CD4-positive, alpha-beta T cell (primary cell): ENCODE measurements at regions of chr20 and their contacts with region 1.

Region 1: GRCh38 chr20:59120491-59120890 is 43.1 kb upstream of the ZNF831 start:
- DNase-seq: peak in 6 of 14 experiments; percentile 23 to 79 (median 50)
- ATAC-seq: no peak
- H3K4me3 ChIP-seq: no peak overlapping the region
- H3K4me3 Mint-ChIP-seq: peak overlapping the region; percentile 72
- H3K27ac ChIP-seq: peak overlapping the region; percentile 77 to 85
- H3K27ac Mint-ChIP-seq: peak overlapping the region; percentile 99
- H3K4me1 ChIP-seq: peaks cover 85% of the 10 kb centered on the region
- H3K4me1 Mint-ChIP-seq: peaks cover 89% of the 10 kb centered on the region
- H3K27me3 ChIP-seq: no peaks in the 10 kb centered on the region
- H3K27me3 Mint-ChIP-seq: no peaks in the 10 kb centered on the region
- CTCF ChIP-seq: no peak

Region 2: GRCh38 chr20:58888521-58889333 is 231.8 kb before region 1 on chr20:
- CTCF ChIA-PET with region 1: no interaction called
- POLR2A ChIA-PET with region 1: interaction called, 18 read pairs
- intact Hi-C with region 1: no loop called
- DNase-seq: peak; percentile 69 to 93 (median 82)
- ATAC-seq: peak; percentile 49
- H3K4me3 ChIP-seq: peak overlapping the region; percentile 83
- H3K4me3 Mint-ChIP-seq: peak overlapping the region; percentile 89
- H3K27ac ChIP-seq: peak overlapping the region; percentile 65 to 72
- H3K27ac Mint-ChIP-seq: peak overlapping the region; percentile 95
- H3K4me1 ChIP-seq: peaks cover 11% of the 10 kb centered on the region
- H3K4me1 Mint-ChIP-seq: peaks cover 52% of the 10 kb centered on the region
- H3K27me3 ChIP-seq: no peaks in the 10 kb centered on the region
- H3K27me3 Mint-ChIP-seq: no peaks in the 10 kb centered on the region
- CTCF ChIP-seq: no peak

Region 3: DNA sequence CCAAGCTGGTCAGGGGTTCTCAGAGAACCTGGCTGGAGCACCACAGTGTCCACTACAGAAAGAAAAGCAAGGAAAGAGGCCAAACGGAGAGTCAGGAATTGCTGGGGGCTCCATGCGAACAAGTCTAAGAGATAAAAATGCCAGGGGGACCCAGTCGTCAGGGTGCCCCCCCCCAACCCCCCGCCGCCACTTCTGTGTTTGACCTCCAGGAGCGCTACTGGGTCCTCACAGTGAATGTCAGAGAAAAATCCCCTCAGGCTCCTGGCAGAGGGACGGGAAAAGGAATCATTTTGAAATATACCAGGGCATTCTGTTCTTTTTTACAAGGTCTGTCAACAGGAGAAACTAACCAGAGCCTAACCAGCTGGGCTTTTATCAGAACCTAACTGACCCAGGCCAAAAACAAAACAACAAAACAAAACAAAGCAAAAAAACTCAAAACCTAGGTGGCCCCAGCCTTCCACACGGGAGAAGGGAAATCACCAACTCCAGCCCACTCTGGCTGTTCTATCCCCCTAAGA is 157.4 kb before region 1 on chr20:
- CTCF ChIA-PET with region 1: no interaction called
- POLR2A ChIA-PET with region 1: no interaction called
- intact Hi-C with region 1: no loop called
- DNase-seq: no peak
- ATAC-seq: no peak
- H3K4me3 ChIP-seq: no peak overlapping the region
- H3K4me3 Mint-ChIP-seq: no peak overlapping the region
- H3K27ac ChIP-seq: no peak overlapping the region
- H3K27ac Mint-ChIP-seq: no peak overlapping the region
- H3K4me1 ChIP-seq: no peaks in the 10 kb centered on the region
- H3K4me1 Mint-ChIP-seq: no peaks in the 10 kb centered on the region
- H3K27me3 ChIP-seq: no peaks in the 10 kb centered on the region
- H3K27me3 Mint-ChIP-seq: peaks cover 7% of the 10 kb centered on the region
- CTCF ChIP-seq: no peak

Region 4: DNA sequence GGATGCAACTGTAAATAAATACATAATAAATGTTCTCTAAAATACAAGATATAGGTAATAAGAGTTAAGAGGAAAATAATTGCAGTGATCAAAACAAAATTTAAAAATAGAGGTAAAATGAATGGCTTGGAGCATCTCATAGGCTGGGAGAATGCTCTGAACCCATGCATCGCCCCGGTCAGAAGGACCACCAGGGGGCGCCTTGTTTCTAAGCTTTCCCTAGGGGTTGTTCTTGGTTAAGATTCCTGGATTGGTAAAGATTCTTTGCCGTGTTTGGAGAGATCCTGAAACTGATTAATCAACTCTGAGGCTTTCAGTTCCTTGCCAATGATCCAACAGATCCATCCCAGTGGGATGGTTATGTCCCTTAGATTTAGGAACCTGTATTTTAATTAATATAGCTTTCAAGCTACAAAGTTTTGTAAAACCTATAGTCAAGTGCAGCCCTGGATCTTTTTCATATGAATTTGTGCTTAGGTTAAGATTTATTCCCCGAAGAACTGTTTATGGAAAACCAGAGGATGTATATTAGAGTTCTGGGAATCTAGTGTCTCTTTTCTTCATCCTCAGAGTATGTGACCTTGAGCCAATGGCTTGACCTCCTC is 32.6 kb before region 1 on chr20:
- CTCF ChIA-PET with region 1: interaction called, 42 read pairs
- POLR2A ChIA-PET with region 1: interaction called, 23 read pairs
- intact Hi-C with region 1: loop called (anchors 2 to 5 kb)
- DNase-seq: peak; percentile 76 to 94 (median 87)
- ATAC-seq: peak; percentile 91
- H3K4me3 ChIP-seq: no peak overlapping the region
- H3K4me3 Mint-ChIP-seq: no peak overlapping the region
- H3K27ac ChIP-seq: no peak overlapping the region
- H3K27ac Mint-ChIP-seq: peak overlapping the region; percentile 44
- H3K4me1 ChIP-seq: peaks cover 3% of the 10 kb centered on the region
- H3K4me1 Mint-ChIP-seq: peaks cover 7% of the 10 kb centered on the region
- H3K27me3 ChIP-seq: no peaks in the 10 kb centered on the region
- H3K27me3 Mint-ChIP-seq: no peaks in the 10 kb centered on the region
- CTCF ChIP-seq: peak; percentile 95

Region 5: DNA sequence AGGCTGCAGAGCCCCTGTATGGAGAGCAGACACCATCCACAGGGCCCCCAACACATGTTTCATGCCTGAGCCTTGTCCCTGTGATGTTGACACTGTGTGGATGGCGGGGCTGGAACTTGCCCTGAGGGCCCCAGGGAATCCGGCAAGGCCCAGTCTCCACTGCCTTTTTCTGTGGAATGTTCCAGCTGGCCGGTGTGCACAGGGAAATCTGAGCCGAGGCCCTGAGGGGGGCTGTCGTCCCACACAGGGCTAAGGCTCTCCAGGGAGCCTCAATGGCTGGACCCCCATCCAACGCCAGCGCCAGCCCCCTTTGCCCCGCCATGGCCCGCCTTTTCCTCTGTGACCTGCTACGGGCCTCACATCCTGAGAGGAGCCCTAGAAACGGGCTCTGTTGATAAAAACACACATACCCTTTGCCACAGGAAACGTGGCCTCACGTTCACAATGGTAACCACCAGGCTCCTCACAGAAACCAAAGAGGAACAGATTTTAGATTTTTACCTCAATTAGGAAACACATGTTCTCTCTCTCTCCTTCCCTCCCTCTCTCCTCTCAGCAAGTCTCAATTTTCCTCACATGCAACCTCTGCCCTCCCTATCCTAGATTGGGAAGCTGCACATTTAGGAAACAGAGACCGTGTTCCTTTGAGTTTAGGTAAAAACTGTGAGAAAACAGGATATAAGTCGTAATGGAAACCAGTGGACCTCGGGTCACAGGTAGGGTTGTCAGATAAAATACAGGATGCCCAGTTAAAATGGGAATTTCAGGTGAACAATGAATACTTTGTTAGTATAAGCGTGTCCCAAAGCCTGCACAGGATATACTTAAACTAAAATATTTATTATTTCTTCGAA is 29.4 kb after region 1 on chr20:
- CTCF ChIA-PET with region 1: interaction called, 13 read pairs
- POLR2A ChIA-PET with region 1: interaction called, 203 read pairs
- intact Hi-C with region 1: loop called in 1 of 2 experiments (anchors 2 kb)
- DNase-seq: peak; percentile 52 to 94 (median 72)
- ATAC-seq: peak; percentile 79
- H3K4me3 ChIP-seq: peak overlapping the region; percentile 21
- H3K4me3 Mint-ChIP-seq: peak overlapping the region; percentile 82
- H3K27ac ChIP-seq: peak overlapping the region; percentile 95 to 96
- H3K27ac Mint-ChIP-seq: peak overlapping the region; percentile 97
- H3K4me1 ChIP-seq: peaks cover 99% of the 10 kb centered on the region
- H3K4me1 Mint-ChIP-seq: peaks cover 95% of the 10 kb centered on the region
- H3K27me3 ChIP-seq: no peaks in the 10 kb centered on the region
- H3K27me3 Mint-ChIP-seq: no peaks in the 10 kb centered on the region
- CTCF ChIP-seq: no peak

Region 6: GRCh38 chr20:59184880-59185447 is 64.5 kb after region 1 on chr20:
- CTCF ChIA-PET with region 1: no interaction called
- POLR2A ChIA-PET with region 1: interaction called, 7 read pairs
- intact Hi-C with region 1: loop called in 1 of 2 experiments (anchors 5 kb)
- DNase-seq: no peak
- ATAC-seq: no peak
- H3K4me3 ChIP-seq: no peak overlapping the region
- H3K4me3 Mint-ChIP-seq: no peak overlapping the region
- H3K27ac ChIP-seq: no peak overlapping the region
- H3K27ac Mint-ChIP-seq: peak overlapping the region; percentile 69
- H3K4me1 ChIP-seq: peaks cover 22% of the 10 kb centered on the region
- H3K4me1 Mint-ChIP-seq: peaks cover 57% of the 10 kb centered on the region
- H3K27me3 ChIP-seq: no peaks in the 10 kb centered on the region
- H3K27me3 Mint-ChIP-seq: no peaks in the 10 kb centered on the region
- CTCF ChIP-seq: no peak

Region 7: DNA sequence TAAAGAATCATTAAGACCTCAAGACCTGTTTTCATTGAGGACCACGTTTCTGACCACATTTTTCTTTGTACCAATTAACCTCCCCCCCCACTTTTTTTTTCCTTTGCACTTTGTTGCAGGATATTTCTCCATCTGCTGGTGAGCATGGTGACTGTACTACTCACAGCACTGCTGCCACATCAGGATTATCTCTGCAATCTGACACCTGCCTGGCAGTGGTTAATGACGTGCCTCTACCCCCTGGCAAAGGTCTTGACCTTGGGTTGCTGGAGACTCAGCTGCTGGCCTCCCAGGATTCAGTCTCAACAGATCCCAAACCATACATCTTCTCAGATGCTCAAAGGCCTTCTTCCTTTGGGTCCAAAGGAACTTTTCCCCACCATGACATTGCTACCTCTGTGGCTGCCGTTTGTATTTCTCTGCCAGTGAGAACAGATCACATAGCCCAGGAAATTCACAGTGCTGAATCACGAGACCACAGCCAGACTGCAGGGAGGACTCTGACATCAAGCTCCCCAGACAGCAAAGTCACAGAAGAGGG is 133.4 kb after region 1 on chr20:
- CTCF ChIA-PET with region 1: no interaction called
- POLR2A ChIA-PET with region 1: interaction called, 23 read pairs
- intact Hi-C with region 1: loop called in 1 of 2 experiments (anchors 5 kb)
- DNase-seq: peak in 12 of 14 experiments; percentile 11 to 64 (median 30)
- ATAC-seq: peak; percentile 63
- H3K4me3 ChIP-seq: no peak overlapping the region
- H3K4me3 Mint-ChIP-seq: peak overlapping the region; percentile 78
- H3K27ac ChIP-seq: peak overlapping the region; percentile 46 to 51
- H3K27ac Mint-ChIP-seq: peak overlapping the region; percentile 94
- H3K4me1 ChIP-seq: peaks cover 28% of the 10 kb centered on the region
- H3K4me1 Mint-ChIP-seq: peaks cover 82% of the 10 kb centered on the region
- H3K27me3 ChIP-seq: no peaks in the 10 kb centered on the region
- H3K27me3 Mint-ChIP-seq: no peaks in the 10 kb centered on the region
- CTCF ChIP-seq: no peak